Endothelial cell of umbilical vein (primary cell): ENCODE measurements at regions of chr1 and their contacts with region 1.

Region 1: GRCh38 chr1:60281360-60281932 is 207.9 kb upstream of the C1orf87 start:
- DNase-seq: peak; percentile 92
- H3K4me3 ChIP-seq: no peak overlapping the region
- H3K27ac ChIP-seq: peak overlapping the region; percentile 74
- H3K4me1 ChIP-seq: peaks cover 40% of the 10 kb centered on the region
- H3K27me3 ChIP-seq: no peaks in the 10 kb centered on the region
- CTCF ChIP-seq: peak; percentile 92 to 98
- POLR2A ChIP-seq: no peak

Region 2: GRCh38 chr1:59750328-59751003 is 531.0 kb before region 1 on chr1:
- CTCF ChIA-PET with region 1: no interaction called
- POLR2A ChIA-PET with region 1: no interaction called
- dilution Hi-C with region 1: no loop called
- intact Hi-C with region 1: no loop called
- DNase-seq: peak; percentile 97
- H3K4me3 ChIP-seq: peak overlapping the region in 1 of 3 experiments; percentile 19
- H3K27ac ChIP-seq: peak overlapping the region; percentile 87
- H3K4me1 ChIP-seq: peaks cover 30% of the 10 kb centered on the region
- H3K27me3 ChIP-seq: no peaks in the 10 kb centered on the region
- CTCF ChIP-seq: no peak
- POLR2A ChIP-seq: no peak

Region 3: GRCh38 chr1:60298290-60298689 is 16.8 kb after region 1 on chr1:
- CTCF ChIA-PET with region 1: interaction called, 13 read pairs
- POLR2A ChIA-PET with region 1: no interaction called
- dilution Hi-C with region 1: no loop called
- intact Hi-C with region 1: no loop called
- DNase-seq: no peak
- H3K4me3 ChIP-seq: no peak overlapping the region
- H3K27ac ChIP-seq: no peak overlapping the region
- H3K4me1 ChIP-seq: no peaks in the 10 kb centered on the region
- H3K27me3 ChIP-seq: no peaks in the 10 kb centered on the region
- CTCF ChIP-seq: no peak
- POLR2A ChIP-seq: no peak

Region 4: GRCh38 chr1:60547821-60548220 is 266.4 kb after region 1 on chr1:
- CTCF ChIA-PET with region 1: interaction called, 11 read pairs
- POLR2A ChIA-PET with region 1: no interaction called
- dilution Hi-C with region 1: no loop called
- intact Hi-C with region 1: no loop called
- DNase-seq: peak; percentile 90
- H3K4me3 ChIP-seq: no peak overlapping the region
- H3K27ac ChIP-seq: no peak overlapping the region
- H3K4me1 ChIP-seq: no peaks in the 10 kb centered on the region
- H3K27me3 ChIP-seq: no peaks in the 10 kb centered on the region
- CTCF ChIP-seq: no peak
- POLR2A ChIP-seq: no peak

Region 5: DNA sequence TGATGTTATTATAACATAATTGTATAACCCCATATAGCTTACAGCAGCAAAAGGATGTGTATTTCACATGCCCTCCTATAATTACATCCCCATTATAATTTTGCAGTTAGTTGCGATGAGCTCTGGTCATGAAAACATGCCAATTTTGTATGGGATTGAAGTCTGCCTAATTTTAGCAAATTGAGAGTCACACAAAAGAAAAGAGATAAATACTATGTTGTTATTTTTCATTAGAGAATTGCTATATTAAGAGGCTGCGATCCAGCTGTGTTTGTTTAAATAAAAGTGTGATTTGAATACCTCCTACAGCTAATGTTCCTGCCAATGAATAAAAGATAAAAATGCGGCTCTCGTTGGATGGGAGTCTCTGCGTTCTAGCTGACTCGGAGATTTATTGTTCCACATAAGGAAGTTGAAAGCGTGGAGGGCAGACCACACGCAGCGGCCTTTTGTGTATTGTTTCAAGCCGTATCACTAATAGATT is 340.0 kb after region 1 on chr1:
- CTCF ChIA-PET with region 1: interaction called, 14 read pairs
- POLR2A ChIA-PET with region 1: no interaction called
- dilution Hi-C with region 1: no loop called
- intact Hi-C with region 1: loop called (anchors 1 kb)
- DNase-seq: peak; percentile 90
- H3K4me3 ChIP-seq: no peak overlapping the region
- H3K27ac ChIP-seq: peak overlapping the region; percentile 46
- H3K4me1 ChIP-seq: peaks cover 29% of the 10 kb centered on the region
- H3K27me3 ChIP-seq: no peaks in the 10 kb centered on the region
- CTCF ChIP-seq: no peak
- POLR2A ChIP-seq: no peak

Region 6: GRCh38 chr1:60848583-60849188 is 567.2 kb after region 1 on chr1:
- CTCF ChIA-PET with region 1: interaction called, 60 read pairs
- POLR2A ChIA-PET with region 1: no interaction called
- dilution Hi-C with region 1: no loop called
- intact Hi-C with region 1: loop called (anchors 1 kb)
- DNase-seq: peak; percentile 79
- H3K4me3 ChIP-seq: no peak overlapping the region
- H3K27ac ChIP-seq: no peak overlapping the region
- H3K4me1 ChIP-seq: no peaks in the 10 kb centered on the region
- H3K27me3 ChIP-seq: no peaks in the 10 kb centered on the region
- CTCF ChIP-seq: peak; percentile 35 to 45
- POLR2A ChIP-seq: no peak

Region 7: GRCh38 chr1:61049850-61050540 is 768.5 kb after region 1 on chr1:
- CTCF ChIA-PET with region 1: interaction called, 15 read pairs
- POLR2A ChIA-PET with region 1: no interaction called
- dilution Hi-C with region 1: no loop called
- intact Hi-C with region 1: no loop called
- DNase-seq: peak; percentile 93
- H3K4me3 ChIP-seq: peak overlapping the region; percentile 62 to 95 (median 92)
- H3K27ac ChIP-seq: peak overlapping the region; percentile 84
- H3K4me1 ChIP-seq: peaks cover 16% of the 10 kb centered on the region
- H3K27me3 ChIP-seq: no peaks in the 10 kb centered on the region
- CTCF ChIP-seq: peak; percentile 89 to 96
- POLR2A ChIP-seq: peak; percentile 40

Region 8: GRCh38 chr1:61851849-61852669 is 1570.6 kb after region 1 on chr1:
- CTCF ChIA-PET with region 1: interaction called, 25 read pairs
- POLR2A ChIA-PET with region 1: no interaction called
- dilution Hi-C with region 1: no loop called
- intact Hi-C with region 1: loop called (anchors 1 kb)
- DNase-seq: peak; percentile 74
- H3K4me3 ChIP-seq: no peak overlapping the region
- H3K27ac ChIP-seq: peak overlapping the region; percentile 45
- H3K4me1 ChIP-seq: peaks cover 14% of the 10 kb centered on the region
- H3K27me3 ChIP-seq: no peaks in the 10 kb centered on the region
- CTCF ChIP-seq: peak; percentile 40 to 58
- POLR2A ChIP-seq: no peak